ENCODE measurements at regions of chr12 and their contacts with region 1.

Region 1: DNA sequence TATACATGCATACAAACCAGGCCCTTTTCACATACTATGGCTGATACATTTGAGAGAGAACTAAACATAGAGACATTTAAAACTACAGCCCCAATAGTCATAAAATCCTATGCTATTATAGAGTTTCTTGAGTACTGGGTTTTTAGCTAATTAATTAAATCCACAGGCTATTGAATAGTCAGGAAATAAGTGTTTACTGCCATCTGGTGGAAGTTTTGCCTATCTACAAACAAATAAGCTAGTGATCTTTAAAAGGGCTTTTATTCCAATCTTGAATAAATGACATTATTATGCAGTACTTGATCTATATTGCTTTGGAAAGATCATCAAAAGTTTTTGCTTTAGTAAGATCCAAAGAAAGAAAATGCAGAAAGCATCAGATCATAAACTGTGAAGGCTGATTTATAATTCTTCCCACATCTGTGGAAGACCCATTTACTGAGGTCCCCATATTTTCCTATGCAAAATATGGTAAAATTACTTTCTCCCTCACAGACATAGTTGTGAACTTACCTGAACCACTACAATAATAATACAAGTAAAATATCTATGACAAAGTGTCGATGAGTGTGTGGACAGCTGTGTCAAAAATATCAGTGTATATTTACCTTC is 131.3 kb downstream of the ITPR2 start:
- DNase-seq: no peak
- H3K4me3 Mint-ChIP-seq: no peak overlapping the region
- H3K27ac Mint-ChIP-seq: no peak overlapping the region
- H3K4me1 Mint-ChIP-seq: peaks cover under 1% of the 10 kb centered on the region
- H3K27me3 Mint-ChIP-seq: no peaks in the 10 kb centered on the region

Region 2: GRCh38 chr12:26097046-26097878 is 604.4 kb before region 1 on chr12:
- CTCF ChIA-PET with region 1: interaction called, 11 read pairs
- POLR2A ChIA-PET with region 1: no interaction called
- DNase-seq: peak; percentile 52
- H3K4me3 Mint-ChIP-seq: no peak overlapping the region
- H3K27ac Mint-ChIP-seq: no peak overlapping the region
- H3K4me1 Mint-ChIP-seq: no peaks in the 10 kb centered on the region
- H3K27me3 Mint-ChIP-seq: peaks cover 23% of the 10 kb centered on the region